ENCODE measurements at regions of chr12 and their contacts with region 1.

Region 1: DNA sequence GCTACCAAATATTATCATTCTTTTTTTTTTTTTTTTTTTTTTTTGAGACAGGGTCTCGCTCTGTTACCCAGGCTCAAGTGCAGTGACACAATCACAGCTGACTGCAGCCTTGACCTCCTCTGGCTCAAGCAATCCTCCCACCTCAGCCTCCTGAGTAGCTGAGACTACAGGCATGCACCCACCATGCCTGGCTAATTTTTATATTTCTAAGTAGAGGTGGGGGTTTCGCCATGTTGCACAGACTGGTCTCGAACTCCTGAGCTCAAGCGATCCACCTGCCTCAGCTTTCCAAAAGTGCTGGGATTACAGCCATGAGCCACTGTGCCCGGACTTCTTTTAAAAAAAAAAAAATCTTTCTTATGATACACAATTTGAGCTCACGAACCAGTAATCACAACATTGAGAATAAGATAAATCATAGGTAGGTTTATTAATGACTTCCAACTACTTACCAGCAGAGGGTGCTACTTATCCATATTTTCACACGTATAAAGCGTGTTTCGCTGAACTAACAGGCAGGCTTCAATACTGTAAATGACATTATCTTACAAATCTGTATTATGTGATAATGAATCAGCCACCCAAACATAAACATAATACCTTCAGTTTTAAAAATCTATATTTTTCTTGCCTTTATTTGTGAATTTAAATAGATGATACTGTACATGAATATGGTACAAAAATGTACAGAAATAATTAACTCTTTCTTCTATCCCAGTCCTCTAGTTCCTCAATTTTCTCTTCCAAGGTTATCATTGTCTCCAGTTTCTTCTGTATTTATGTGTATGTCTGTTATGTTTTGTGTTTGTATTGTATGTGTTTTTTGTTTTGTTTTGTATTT is 42.5 kb upstream of the BCAT1 start:
- DNase-seq: peak; percentile 63
- CTCF ChIP-seq: peak; percentile 47

Region 2: DNA sequence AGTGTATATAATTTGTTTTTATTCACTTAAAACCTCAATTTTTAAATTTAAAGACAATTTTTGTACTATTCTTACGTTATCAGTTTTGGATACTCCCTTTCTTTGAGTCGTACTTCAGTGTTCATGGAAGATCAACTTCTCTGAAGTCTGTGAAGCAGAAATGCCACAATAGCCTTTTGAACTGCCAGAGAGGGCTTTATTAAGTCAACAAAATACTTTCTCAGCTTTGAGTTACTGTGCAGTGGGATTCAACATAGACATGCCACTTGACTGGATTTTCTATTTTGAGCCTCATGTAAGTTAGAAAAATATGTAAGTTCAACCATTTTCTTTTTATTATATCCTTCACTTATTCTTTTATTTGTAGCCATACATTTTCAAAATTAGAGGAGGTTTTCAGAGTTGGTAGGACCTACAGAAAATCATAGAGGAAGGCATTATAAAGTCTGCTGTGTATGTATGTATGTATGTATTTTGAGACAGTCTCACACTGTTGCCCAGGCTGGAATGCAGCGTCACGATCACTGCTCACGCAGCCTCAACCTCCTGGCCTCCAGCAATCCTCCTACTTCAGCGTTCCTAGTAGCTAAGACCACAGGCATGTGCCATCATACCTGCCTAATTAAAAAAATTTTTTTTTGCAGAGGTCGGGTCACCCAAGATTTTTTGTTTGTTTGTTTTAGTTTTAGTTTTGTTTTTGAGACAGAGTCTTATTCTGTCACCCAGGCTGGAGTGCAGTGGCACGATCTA is 11.3 kb before region 1 on chr12:
- CTCF ChIA-PET with region 1: interaction called, 20 read pairs
- POLR2A ChIA-PET with region 1: no interaction called
- DNase-seq: no peak
- CTCF ChIP-seq: no peak

Region 3: DNA sequence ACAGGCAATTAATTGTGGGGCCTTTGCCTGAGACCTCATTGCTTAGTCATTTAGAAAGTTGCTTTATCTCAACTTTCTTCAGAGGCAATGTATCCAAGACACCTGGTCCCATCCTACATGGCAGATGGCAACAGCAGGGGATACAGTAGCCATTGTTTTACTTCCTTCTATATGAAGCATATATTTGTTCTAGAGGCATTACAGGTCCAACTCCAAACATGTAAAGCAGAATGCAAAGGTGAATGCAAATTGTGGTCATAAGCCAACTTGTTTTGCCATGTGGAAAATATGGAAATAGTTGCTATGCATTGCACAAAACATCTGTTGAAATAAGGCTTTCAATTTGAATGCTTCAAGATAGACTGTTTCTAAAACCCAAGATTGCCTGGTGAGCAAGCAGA is 67.2 kb after region 1 on chr12:
- CTCF ChIA-PET with region 1: interaction called, 25 read pairs
- POLR2A ChIA-PET with region 1: no interaction called
- DNase-seq: no peak
- CTCF ChIP-seq: no peak

Region 4: GRCh38 chr12:25130741-25131188 is 139.3 kb after region 1 on chr12:
- CTCF ChIA-PET with region 1: interaction called, 62 read pairs
- POLR2A ChIA-PET with region 1: no interaction called
- DNase-seq: peak; percentile 38
- CTCF ChIP-seq: peak; percentile 45

Region 5: GRCh38 chr12:25156061-25156460 is 164.6 kb after region 1 on chr12:
- CTCF ChIA-PET with region 1: interaction called, 32 read pairs
- POLR2A ChIA-PET with region 1: no interaction called
- DNase-seq: no peak
- CTCF ChIP-seq: no peak

Region 6: GRCh38 chr12:25469861-25470260 is 478.4 kb after region 1 on chr12:
- CTCF ChIA-PET with region 1: no interaction called
- POLR2A ChIA-PET with region 1: no interaction called
- DNase-seq: no peak
- CTCF ChIP-seq: no peak